Ascending aorta (tissue), 2 donors: ENCODE measurements at regions of chr5 and their contacts with region 1.

Region 1: DNA sequence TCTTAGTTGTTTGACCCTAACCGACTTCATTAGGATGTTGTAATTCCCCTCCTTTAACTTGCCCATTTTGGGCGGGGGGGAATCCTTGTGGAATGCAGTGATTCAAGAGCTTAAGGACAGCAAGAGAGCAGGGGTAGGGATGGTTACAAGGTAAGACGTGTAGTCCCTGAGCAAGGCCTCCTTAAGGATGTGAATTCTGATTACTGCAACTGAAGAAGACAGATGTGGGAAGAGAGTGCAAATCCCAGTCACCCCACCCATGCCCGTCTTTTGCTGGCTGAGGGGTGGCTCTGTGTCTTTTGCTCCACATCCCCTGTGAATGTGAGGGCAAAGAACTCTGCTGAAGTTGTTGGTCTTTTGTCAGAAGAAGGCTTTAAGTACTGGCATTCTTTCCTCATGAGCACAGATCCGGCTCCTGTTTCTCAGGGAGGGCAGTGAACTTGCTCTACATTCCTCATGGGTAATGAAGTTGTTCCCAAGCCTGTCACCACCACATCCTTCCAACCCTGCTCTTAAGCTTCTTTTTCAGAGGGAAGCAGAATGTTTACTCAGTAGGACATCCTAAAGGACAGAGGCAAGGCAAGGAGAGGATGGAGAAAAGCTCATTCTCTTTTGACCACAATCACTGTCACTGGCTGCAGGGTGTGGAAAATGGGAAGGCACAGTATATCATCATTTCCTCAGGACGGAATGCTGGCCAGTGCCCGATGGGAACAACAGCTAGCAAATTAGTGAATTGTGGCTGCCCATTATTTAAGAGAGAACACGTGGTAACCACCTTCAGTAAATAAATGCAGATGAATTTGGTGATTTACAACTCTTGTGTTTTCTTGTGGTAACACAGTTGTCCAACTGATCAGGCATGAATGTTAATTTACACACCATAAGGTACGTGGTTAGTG is 61.5 kb downstream of the RAI14 start:
- DNase-seq: peak in 1 of 2 donors; percentile 79
- H3K4me3 ChIP-seq: no peak overlapping the region
- H3K27ac ChIP-seq: peak overlapping the region; percentile 63 to 73
- H3K4me1 ChIP-seq: peaks cover 0 to 21% of the 10 kb centered on the region in 2 donors
- H3K27me3 ChIP-seq: no peaks in the 10 kb centered on the region
- CTCF ChIP-seq: no peak

Region 2: GRCh38 chr5:34598177-34598794 is 119.4 kb before region 1 on chr5:
- intact Hi-C with region 1: loop called (anchors 5 kb)
- DNase-seq: no peak
- H3K4me3 ChIP-seq: no peak overlapping the region
- H3K27ac ChIP-seq: peak overlapping the region in 1 of 2 donors; percentile 56
- H3K4me1 ChIP-seq: peaks cover 0 to 16% of the 10 kb centered on the region in 2 donors
- H3K27me3 ChIP-seq: no peaks in the 10 kb centered on the region
- CTCF ChIP-seq: no peak

Region 3: DNA sequence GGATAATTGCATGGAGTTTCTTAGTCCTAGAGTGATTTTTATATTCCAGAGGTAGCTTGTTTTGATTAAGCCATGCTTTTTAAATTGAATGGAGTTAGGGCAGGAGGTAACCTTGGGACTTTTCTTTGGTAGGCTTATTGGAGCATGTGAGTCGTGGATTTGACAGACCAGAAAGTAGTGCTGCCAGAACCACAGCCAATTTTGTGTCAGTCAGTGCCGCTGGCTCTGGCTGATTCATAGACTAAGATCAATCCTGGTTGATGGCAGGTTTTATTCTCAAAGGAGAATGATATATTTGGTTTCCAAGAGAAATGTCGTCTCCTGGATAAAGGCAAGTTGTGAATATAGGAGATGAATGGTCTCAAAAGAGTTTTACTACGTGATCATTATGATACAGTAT is 41.3 kb before region 1 on chr5:
- intact Hi-C with region 1: loop called (anchors 5 kb)
- DNase-seq: peak in 1 of 2 donors; percentile 69
- H3K4me3 ChIP-seq: no peak overlapping the region
- H3K27ac ChIP-seq: peak overlapping the region in 1 of 2 donors; percentile 93
- H3K4me1 ChIP-seq: peaks cover 5 to 41% of the 10 kb centered on the region in 2 donors
- H3K27me3 ChIP-seq: no peaks in the 10 kb centered on the region
- CTCF ChIP-seq: no peak

Region 4: DNA sequence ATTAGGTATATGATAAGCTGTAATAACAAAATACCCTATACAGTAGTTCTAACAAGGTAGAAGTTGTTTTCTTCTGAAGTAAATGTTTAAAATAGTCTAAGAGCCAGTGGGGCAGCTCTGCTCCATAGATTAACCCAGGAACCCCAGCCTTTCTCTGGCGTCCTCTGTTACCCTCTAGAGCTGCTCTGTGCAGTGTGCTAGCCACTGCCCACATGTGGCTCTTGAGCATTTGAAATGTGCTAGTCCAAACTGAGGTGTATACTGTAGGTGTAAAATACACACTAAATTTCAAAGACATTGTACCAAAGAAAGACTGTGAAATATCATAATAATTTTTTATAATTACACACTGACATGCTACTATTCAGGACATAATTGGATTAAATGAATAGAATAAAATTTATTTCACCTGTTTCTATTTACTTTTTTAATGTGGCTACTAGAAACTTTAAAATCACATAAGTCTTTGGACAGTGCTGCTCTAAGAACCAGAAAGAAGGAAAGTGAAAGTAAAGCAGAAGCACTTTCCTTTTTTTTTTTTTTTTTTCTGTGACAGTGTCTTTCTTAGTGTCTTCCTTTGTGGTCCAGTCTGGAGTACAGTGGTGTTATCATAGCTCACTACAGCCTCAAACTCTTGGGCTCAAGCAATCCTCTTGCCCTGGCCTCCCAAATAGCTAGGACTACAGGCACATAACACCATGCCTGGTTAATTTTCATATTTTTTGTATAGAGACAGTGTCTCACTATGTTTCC is 22.2 kb before region 1 on chr5:
- intact Hi-C with region 1: no loop called
- DNase-seq: no peak
- H3K4me3 ChIP-seq: peak overlapping the region; percentile 9
- H3K27ac ChIP-seq: peak overlapping the region; percentile 63 to 70
- H3K4me1 ChIP-seq: peaks cover 16 to 43% of the 10 kb centered on the region in 2 donors
- H3K27me3 ChIP-seq: no peaks in the 10 kb centered on the region
- CTCF ChIP-seq: no peak

Region 5: DNA sequence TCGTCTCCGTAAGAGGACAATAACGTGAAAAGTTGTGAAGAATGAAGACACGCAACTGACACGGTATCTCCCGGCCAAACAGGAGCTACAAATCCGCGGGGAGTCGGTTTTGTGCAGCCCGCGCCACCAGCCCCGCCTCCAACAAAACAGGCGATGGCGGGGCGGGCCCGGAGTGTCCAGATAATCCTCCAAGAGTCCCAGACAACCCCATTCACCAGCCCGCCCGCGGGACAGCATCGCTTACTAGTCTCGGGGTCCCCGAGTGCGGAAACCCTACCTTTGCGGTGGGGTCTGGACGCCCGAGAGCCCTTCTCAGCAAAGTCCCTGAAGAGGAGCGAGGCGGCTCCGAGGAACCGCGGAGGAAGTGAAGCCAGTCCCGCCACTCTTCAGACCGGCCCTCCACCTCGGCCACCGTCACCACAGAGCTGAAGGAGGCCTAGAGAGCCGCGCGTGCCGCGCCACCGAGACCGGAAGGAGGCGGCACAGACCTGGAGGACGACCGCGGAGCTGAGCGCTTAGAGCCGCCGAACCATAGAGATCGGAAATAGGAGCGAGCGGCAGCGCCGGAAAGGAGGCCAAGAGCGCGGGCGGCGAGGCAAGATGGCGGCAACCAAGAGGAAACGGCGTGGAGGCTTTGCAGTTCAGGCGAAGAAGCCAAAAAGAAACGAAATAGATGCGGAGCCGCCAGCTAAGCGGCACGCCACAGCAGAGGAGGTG is 197.6 kb after region 1 on chr5 and contains the starts of genes BRIX1 and RAD1:
- intact Hi-C with region 1: no loop called
- DNase-seq: peak; percentile 88 to 98
- H3K4me3 ChIP-seq: peak within 1 kb of the TSS; percentile 89 to 93
- H3K27ac ChIP-seq: peak within 1 kb of the TSS; percentile 85 to 87
- H3K4me1 ChIP-seq: peaks cover 0 to 18% of the 10 kb centered on the region in 2 donors
- H3K27me3 ChIP-seq: no peaks in the 10 kb centered on the region
- CTCF ChIP-seq: peak in 1 of 3 experiments; percentile 22
- total RNA-seq, gene BRIX1: 8.5 TPM
- total RNA-seq, gene RAD1: 2.0 TPM

Region 6: GRCh38 chr5:35383041-35383440 is 665.4 kb after region 1 on chr5:
- intact Hi-C with region 1: no loop called
- DNase-seq: no peak
- H3K4me3 ChIP-seq: no peak overlapping the region
- H3K27ac ChIP-seq: no peak overlapping the region
- H3K4me1 ChIP-seq: no peaks in the 10 kb centered on the region
- H3K27me3 ChIP-seq: no peaks in the 10 kb centered on the region
- CTCF ChIP-seq: no peak